HepG2 (cell line): ENCODE measurements at regions of chr10 and their contacts with region 1.

Region 1: GRCh38 chr10:58334817-58335305 is at the start of gene UBE2D1:
- DNase-seq: peak; percentile 63
- ATAC-seq: peak; percentile 97
- H3K4me3 ChIP-seq: peak within 1 kb of the TSS; percentile 81 to 99 (median 90)
- H3K27ac ChIP-seq: peak within 1 kb of the TSS; percentile 41
- H3K4me1 ChIP-seq: peaks cover 18% of the 10 kb centered on the region
- H3K27me3 ChIP-seq: peaks cover 0 to 3% of the 10 kb centered on the region in 2 experiments; a peak in 1 of 5 replicates
- CTCF ChIP-seq: peak; percentile 42; the same call in 1 of the 2 replicates
- EP300 ChIP-seq: no peak
- POLR2A ChIP-seq: peak; percentile 82 to 98
- RAD21 ChIP-seq: peak; percentile 55; the same call in 1 of the 2 replicates
- total RNA-seq, gene UBE2D1: 6.2 and 7.9 TPM in 2 replicates

Region 2: DNA sequence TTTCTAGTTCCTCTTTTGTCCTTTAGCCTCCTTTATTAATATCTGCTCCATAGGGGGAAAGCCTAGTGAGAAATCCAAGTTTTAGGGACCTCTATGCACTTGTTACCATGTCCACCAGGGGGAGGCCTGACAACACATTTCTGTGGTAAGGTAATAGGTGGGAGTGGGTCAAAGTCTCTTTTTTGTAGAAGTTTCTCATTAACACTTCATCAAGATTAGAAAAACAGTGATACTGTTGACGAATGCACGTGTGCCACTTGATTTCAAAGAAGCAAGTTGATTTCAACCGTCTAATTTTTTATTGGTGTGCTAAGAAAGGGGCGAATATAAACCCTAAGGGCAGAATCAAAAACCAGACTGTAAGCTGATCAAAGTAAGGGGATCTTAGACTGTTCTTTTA is 35.3 kb before region 1 on chr10:
- CTCF ChIA-PET with region 1: no interaction called
- POLR2A ChIA-PET with region 1: interaction called, 6 read pairs
- in situ Hi-C with region 1: no loop called
- intact Hi-C with region 1: loop called (anchors 1 kb)
- DNase-seq: peak; percentile 71
- ATAC-seq: peak; percentile 99
- H3K4me3 ChIP-seq: peak overlapping the region in 2 of 3 experiments; percentile 13 to 29; a peak in 2 of 6 replicates
- H3K27ac ChIP-seq: no peak overlapping the region
- H3K4me1 ChIP-seq: peaks cover 31% of the 10 kb centered on the region
- H3K27me3 ChIP-seq: no peaks in the 10 kb centered on the region
- CTCF ChIP-seq: peak; percentile 87
- EP300 ChIP-seq: no peak
- POLR2A ChIP-seq: no peak
- RAD21 ChIP-seq: peak; percentile 70

Region 3: DNA sequence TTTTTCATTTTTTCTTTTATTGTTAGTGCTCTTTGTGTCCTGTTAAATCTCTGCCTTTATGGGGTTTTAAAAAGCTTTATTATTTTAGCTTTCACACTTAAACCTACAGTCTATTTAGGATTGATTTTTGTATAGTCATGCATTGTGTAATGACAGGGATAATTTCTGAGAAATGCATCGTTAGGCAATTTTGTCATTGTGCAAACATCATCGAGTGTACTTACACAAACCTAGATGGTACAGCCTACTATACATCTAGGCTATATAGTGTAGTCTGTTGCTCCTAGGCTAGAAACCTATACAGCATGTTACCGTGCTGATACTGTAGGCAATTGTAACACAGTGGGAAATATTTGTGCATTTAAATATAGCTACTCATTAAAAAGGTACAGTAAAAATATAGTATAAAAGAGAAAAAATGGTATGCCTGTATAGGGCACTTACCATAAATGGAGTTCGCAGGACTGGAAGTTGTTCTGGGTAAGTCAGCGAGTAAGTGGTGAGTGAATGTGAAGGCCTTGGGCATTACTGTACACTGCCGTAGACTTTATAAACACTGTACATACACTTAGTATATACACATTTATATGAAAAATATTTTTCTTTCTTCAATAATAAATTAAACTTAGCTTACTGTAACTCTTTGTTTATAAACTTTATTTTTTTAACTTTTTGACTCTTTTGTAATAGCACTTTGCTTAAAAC is 15.9 kb after region 1 on chr10:
- CTCF ChIA-PET with region 1: no interaction called
- POLR2A ChIA-PET with region 1: interaction called, 16 read pairs
- in situ Hi-C with region 1: no loop called
- intact Hi-C with region 1: no loop called
- DNase-seq: peak; percentile 58
- ATAC-seq: peak; percentile 56
- H3K4me3 ChIP-seq: no peak overlapping the region
- H3K27ac ChIP-seq: peak overlapping the region; percentile 21
- H3K4me1 ChIP-seq: peaks cover 35% of the 10 kb centered on the region
- H3K27me3 ChIP-seq: no peaks in the 10 kb centered on the region
- CTCF ChIP-seq: no peak
- EP300 ChIP-seq: peak in 1 of 2 experiments; percentile 42; a peak in 1 of 4 replicates
- POLR2A ChIP-seq: no peak
- RAD21 ChIP-seq: no peak